ENCODE measurements at regions of chr12 and their contacts with region 1.

Region 1: GRCh38 chr12:56636675-56637540 is 6.8 kb upstream of the BAZ2A start:
- DNase-seq: peak; percentile 96
- ATAC-seq: peak; percentile 80
- H3K4me3 ChIP-seq: peak overlapping the region; percentile 65 to 90
- H3K27ac ChIP-seq: peak overlapping the region; percentile 96
- H3K4me1 ChIP-seq: peaks cover 33% of the 10 kb centered on the region
- H3K27me3 ChIP-seq: no peaks in the 10 kb centered on the region
- CTCF ChIP-seq: peak; percentile 92

Region 2: DNA sequence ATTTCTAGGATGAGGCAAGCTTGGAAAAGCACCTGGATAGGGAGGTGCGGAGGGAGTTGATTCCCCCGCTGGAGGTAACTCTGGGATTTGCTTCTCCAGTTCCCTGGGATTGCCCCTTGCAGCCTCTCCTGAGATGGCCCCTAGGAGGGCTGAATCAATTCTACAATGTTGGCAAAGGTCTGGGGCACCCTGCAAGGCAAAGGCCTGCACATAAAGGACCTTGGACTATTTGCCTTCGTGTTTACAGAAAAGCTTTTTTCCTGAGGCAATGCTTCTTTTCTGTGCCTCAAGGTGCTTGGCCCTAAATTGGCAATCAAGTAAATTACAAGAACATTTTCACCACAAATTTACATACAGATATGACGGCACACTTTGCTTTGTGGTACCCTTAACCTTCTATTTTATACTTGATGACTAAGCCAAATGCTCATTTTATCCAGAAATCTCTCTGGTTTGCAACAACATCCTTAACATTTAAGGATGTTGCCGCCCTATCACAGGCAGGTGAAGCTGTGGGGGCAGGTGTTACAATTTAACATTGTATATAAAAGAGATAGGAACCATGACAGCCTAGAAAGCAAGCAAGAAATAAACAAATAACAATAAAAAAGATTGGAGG is 228.0 kb before region 1 on chr12:
- CTCF ChIA-PET with region 1: no interaction called
- POLR2A ChIA-PET with region 1: no interaction called
- in situ Hi-C with region 1: no loop called
- intact Hi-C with region 1: no loop called
- DNase-seq: no peak
- ATAC-seq: no peak
- H3K4me3 ChIP-seq: no peak overlapping the region
- H3K27ac ChIP-seq: no peak overlapping the region
- H3K4me1 ChIP-seq: no peaks in the 10 kb centered on the region
- H3K27me3 ChIP-seq: no peaks in the 10 kb centered on the region
- CTCF ChIP-seq: no peak

Region 3: GRCh38 chr12:56541631-56542030 is 95.3 kb before region 1 on chr12:
- CTCF ChIA-PET with region 1: no interaction called
- POLR2A ChIA-PET with region 1: interaction called, 10 read pairs
- in situ Hi-C with region 1: no loop called
- intact Hi-C with region 1: no loop called
- DNase-seq: no peak
- ATAC-seq: no peak
- H3K4me3 ChIP-seq: no peak overlapping the region
- H3K27ac ChIP-seq: no peak overlapping the region
- H3K4me1 ChIP-seq: no peaks in the 10 kb centered on the region
- H3K27me3 ChIP-seq: no peaks in the 10 kb centered on the region
- CTCF ChIP-seq: no peak

Region 4: DNA sequence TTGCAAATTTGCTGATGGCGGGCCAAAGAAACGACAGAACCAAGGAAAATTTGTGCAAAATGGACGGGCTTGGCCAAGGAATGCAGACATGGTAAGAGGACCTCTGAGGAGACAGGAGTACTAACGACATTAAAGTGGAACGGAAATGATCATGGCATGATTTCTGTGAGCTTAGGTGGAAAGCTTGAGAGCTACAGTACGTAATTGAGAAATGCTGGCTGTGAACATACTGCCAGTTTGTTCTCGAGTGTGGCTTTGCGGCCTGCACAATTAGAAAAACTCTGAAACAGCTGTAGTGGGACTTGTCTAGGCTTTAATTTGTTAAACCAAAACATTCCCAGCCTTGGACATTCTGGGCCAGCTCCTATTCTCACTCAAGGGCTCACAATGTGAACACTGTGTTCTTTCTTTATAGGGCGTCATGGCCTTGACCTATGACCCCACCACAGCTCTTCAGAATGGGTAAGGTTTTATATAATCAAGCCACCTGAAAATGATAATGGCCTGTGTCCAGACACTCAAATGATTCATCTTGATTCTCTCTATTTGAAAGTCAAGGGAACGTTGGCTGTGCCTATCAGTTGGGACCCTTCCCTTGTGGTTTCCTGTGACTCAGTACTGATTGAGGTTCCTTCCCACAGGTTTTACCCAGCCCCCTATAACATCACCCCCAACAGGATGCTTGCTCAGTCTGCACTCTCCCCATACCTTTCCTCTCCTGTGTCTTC is 55.3 kb before region 1 on chr12:
- CTCF ChIA-PET with region 1: interaction called, 11 read pairs
- POLR2A ChIA-PET with region 1: no interaction called
- in situ Hi-C with region 1: no loop called
- intact Hi-C with region 1: no loop called
- DNase-seq: no peak
- ATAC-seq: no peak
- H3K4me3 ChIP-seq: no peak overlapping the region
- H3K27ac ChIP-seq: no peak overlapping the region
- H3K4me1 ChIP-seq: no peaks in the 10 kb centered on the region
- H3K27me3 ChIP-seq: no peaks in the 10 kb centered on the region
- CTCF ChIP-seq: no peak

Region 5: DNA sequence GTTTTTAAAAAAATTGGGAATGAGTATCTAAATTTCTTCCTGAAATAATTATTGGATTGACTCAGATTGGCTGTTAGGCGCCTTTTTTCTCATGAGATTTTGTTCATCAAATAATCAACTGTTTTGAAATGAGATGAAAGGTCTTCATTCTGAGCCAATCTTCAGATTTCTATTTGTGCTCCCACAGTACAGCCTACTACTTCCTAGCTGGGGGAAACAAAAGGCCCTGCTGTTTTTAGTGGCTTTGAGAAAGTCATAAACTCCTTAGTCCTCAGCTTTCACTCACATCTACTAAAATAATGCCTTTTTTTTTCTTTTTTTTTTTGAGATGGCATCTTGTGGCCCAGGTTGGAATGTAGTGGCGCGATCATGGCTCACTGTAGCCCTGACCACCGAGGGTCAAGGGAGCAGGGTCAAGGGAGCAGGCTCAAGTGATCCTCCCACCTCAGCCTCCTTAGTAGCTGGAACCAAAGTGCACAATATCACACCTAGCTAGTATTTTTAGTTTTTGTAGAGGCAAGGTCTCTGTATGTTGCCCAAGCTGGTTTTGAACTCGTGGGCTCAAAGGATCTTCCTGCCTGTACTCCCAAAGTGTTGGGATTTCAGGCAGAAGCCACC is 73.0 kb after region 1 on chr12:
- CTCF ChIA-PET with region 1: no interaction called
- POLR2A ChIA-PET with region 1: no interaction called
- in situ Hi-C with region 1: no loop called
- intact Hi-C with region 1: no loop called
- DNase-seq: no peak
- ATAC-seq: 0 out of 2 replicates have a peak, but pooled peaks have one; percentile 40
- H3K4me3 ChIP-seq: no peak overlapping the region
- H3K27ac ChIP-seq: no peak overlapping the region
- H3K4me1 ChIP-seq: no peaks in the 10 kb centered on the region
- H3K27me3 ChIP-seq: no peaks in the 10 kb centered on the region
- CTCF ChIP-seq: no peak

Region 6: GRCh38 chr12:56792678-56793077 is 155.8 kb after region 1 on chr12:
- CTCF ChIA-PET with region 1: no interaction called
- POLR2A ChIA-PET with region 1: no interaction called
- in situ Hi-C with region 1: no loop called
- intact Hi-C with region 1: no loop called
- DNase-seq: no peak
- ATAC-seq: no peak
- H3K4me3 ChIP-seq: no peak overlapping the region
- H3K27ac ChIP-seq: no peak overlapping the region
- H3K4me1 ChIP-seq: no peaks in the 10 kb centered on the region
- H3K27me3 ChIP-seq: no peaks in the 10 kb centered on the region
- CTCF ChIP-seq: no peak

Measured in Panc1 (cell line).